ENCODE measurements at regions of chr6 and their contacts with region 1.

Region 1: DNA sequence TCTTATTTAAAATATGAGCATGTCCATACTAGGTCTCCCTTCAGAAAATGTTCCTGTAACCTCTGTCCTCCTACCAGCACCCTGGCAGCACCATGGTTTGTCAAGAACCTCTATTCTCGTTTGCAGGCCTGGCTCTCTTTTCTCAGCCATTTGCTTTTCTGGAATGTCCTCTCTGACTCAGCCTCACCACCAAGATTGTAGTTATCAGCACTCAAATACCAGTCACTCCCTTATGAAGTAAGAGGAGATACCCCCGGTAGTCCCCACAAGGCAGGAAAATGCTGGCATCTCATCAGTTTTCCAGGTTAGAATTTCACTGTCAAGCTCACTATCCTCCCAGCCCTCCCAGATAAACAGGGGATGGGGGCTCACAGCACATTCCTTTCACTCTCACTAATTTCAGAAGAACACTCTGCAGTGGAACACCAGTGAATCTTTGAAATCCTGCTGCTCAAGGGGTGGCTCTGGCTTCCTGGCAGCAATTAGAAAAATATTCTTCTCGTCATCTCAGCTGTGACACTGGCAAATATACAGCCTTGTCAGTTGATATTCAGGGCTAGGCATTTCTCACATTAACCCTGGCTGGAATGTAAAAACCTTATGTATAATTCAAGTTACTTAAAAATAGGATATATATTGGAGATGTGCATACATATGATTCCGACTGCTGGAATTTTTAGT is 129.2 kb downstream of the TBX18 start:
- DNase-seq: peak; percentile 37 to 65
- H3K4me3 ChIP-seq: no peak overlapping the region
- H3K27ac ChIP-seq: peak overlapping the region; percentile 43; the same call in 1 of the 2 replicates
- H3K4me1 ChIP-seq: peaks cover 16% of the 10 kb centered on the region; the same call in 1 of the 2 replicates
- H3K27me3 ChIP-seq: no peaks in the 10 kb centered on the region
- CTCF ChIP-seq: no peak

Region 2: GRCh38 chr6:84455630-84456029 is 179.6 kb before region 1 on chr6:
- CTCF ChIA-PET with region 1: no interaction called
- POLR2A ChIA-PET with region 1: no interaction called
- intact Hi-C with region 1: no loop called
- DNase-seq: no peak
- H3K4me3 ChIP-seq: no peak overlapping the region
- H3K27ac ChIP-seq: no peak overlapping the region
- H3K4me1 ChIP-seq: no peaks in the 10 kb centered on the region
- H3K27me3 ChIP-seq: no peaks in the 10 kb centered on the region
- CTCF ChIP-seq: no peak

Region 3: DNA sequence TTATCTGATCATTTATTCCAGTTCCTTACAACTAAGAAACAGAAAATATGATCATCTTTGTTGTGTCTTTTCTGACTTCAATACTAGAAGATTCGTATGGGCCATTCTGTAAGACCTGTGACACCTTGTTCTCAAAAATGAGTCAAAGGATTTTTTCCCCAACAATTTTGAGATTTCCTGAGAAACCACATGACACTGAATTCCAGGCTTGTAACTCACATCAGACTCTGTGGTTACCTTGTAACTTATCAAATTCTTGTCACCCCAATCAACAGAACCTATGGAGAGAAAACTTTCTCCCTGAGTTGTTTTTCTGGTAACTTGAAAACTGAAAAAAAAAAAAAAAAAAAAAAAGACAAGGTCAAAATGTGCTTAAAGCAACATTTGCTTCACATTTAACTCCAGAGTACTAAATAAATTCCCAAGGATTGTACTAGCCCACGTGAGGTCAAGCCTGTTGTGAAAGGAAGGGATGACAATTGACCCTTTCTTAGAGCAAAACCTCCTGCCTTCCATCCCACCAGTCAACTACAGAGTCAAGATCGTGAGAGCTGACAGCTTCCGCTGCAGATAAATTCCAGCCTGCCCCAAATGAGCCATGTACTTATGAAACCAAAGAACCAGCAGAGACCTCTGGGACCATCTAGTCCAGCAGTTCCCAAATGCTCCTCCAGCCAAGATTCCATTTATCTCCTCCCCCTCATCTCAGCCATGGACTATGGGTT is 11.1 kb before region 1 on chr6:
- CTCF ChIA-PET with region 1: no interaction called
- POLR2A ChIA-PET with region 1: no interaction called
- intact Hi-C with region 1: loop called (anchors 1 kb)
- DNase-seq: peak in 1 of 2 experiments; percentile 64
- H3K4me3 ChIP-seq: no peak overlapping the region; the same call in 1 of the 2 replicates
- H3K27ac ChIP-seq: no peak overlapping the region; the same call in 1 of the 2 replicates
- H3K4me1 ChIP-seq: peaks cover 14% of the 10 kb centered on the region; the same call in 1 of the 2 replicates
- H3K27me3 ChIP-seq: no peaks in the 10 kb centered on the region
- CTCF ChIP-seq: no peak

Region 4: DNA sequence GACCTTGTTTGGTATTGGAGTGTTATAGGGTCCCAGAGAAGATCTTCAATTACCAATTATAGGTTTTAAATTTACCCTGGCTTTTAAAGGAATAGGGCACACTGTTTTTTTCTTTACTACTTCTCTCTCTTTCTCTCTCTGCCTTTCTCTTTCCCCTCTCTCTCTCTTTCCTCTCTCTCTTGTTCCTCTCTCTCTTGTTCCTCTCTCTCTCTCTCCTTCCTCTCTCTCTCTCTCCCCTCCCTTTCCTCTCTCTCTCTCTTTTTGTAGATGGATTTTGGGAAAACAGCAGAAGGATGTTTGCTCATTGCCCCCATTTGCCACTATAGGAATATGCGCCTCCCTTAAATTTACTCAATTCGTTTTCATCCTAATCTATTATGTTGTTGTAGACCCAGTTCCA is 83.9 kb after region 1 on chr6:
- CTCF ChIA-PET with region 1: no interaction called
- POLR2A ChIA-PET with region 1: no interaction called
- intact Hi-C with region 1: no loop called
- DNase-seq: no peak
- H3K4me3 ChIP-seq: no peak overlapping the region
- H3K27ac ChIP-seq: no peak overlapping the region
- H3K4me1 ChIP-seq: no peaks in the 10 kb centered on the region
- H3K27me3 ChIP-seq: no peaks in the 10 kb centered on the region
- CTCF ChIP-seq: no peak

Region 5: DNA sequence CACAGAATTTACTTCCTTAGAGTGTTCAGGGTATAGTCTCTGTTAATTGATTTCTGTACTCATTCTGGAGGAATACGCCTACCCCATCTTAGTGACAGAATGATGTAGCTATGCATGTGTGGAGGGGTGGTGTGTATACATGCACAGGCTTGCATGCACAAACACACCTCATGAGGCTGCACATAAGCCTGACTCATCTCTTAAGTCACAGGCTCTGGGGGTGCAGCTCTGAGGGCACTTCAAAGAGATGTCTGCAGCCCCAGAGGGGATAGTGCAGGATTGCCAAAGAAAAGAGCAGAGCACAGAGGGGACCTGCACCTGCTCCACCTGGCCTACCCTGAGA is 104.6 kb after region 1 on chr6:
- CTCF ChIA-PET with region 1: no interaction called
- POLR2A ChIA-PET with region 1: no interaction called
- intact Hi-C with region 1: loop called (anchors 10 kb)
- DNase-seq: no peak
- H3K4me3 ChIP-seq: no peak overlapping the region
- H3K27ac ChIP-seq: no peak overlapping the region
- H3K4me1 ChIP-seq: no peaks in the 10 kb centered on the region
- H3K27me3 ChIP-seq: no peaks in the 10 kb centered on the region
- CTCF ChIP-seq: no peak

Region 6: DNA sequence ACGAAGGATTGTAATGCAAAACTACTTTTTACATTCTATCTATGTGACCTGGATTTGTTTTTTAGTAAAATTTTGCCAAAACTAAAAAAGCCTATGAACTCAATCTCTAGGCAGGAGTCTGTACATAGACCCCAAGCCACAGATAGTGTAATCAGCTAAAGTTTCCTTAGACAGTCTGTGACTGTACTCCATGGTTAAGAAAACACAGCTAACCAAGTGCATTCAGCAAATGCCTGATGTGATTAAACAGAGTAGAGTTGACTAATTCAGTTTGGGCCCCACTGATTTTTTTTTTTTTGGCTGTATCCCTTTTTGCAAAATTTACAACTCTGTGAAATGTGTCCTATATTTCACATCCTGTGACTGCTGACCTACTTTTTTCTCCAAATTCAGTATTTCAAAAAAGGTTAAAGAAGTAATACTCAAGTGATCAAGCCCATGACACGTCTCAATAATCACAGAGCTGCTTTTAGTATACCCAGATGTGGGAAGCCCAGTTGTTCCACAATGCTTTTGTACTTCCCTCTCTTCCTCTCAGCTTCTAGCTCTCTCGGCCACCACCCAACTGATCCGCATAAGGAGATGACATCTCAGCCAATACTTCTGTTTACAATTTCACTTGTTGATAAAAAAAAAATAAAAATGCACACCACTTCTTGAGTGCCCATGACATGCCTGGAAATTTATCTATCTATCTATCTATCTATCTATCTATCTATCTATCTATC is 237.9 kb after region 1 on chr6:
- CTCF ChIA-PET with region 1: no interaction called
- POLR2A ChIA-PET with region 1: no interaction called
- intact Hi-C with region 1: no loop called
- DNase-seq: no peak
- H3K4me3 ChIP-seq: no peak overlapping the region
- H3K27ac ChIP-seq: no peak overlapping the region
- H3K4me1 ChIP-seq: no peaks in the 10 kb centered on the region
- H3K27me3 ChIP-seq: no peaks in the 10 kb centered on the region
- CTCF ChIP-seq: no peak

Measured in PC-9 (cell line).